ENCODE measurements at regions of chr17 and their contacts with region 1.

Region 1: GRCh38 chr17:65556014-65556909 is 5.2 kb downstream of the AXIN2 start:
- DNase-seq: peak; percentile 66 to 89 (median 78)
- ATAC-seq: peak; percentile 6 to 39 (median 27)
- H3K4me3 ChIP-seq: peak overlapping the region in 6 of 12 donors; percentile 4 to 98 (median 8)
- H3K27ac ChIP-seq: peak overlapping the region in 2 of 12 donors; percentile 35 to 56
- H3K4me1 ChIP-seq: peaks cover 0 to 40% (median 20%) of the 10 kb centered on the region in 12 donors
- H3K27me3 ChIP-seq: peaks cover 0 to 14% (median 0%) of the 10 kb centered on the region in 9 donors
- CTCF ChIP-seq: peak; percentile 69 to 84 (median 74)
- POLR2A ChIP-seq: no peak

Region 2: GRCh38 chr17:65294179-65294720 is 262.0 kb before region 1 on chr17:
- intact Hi-C with region 1: loop called in 2 of 10 experiments (anchors 5 to 10 kb)
- DNase-seq: peak; percentile 30 to 63 (median 56)
- ATAC-seq: peak; percentile 55 to 95 (median 88)
- H3K4me3 ChIP-seq: no peak overlapping the region
- H3K27ac ChIP-seq: no peak overlapping the region
- H3K4me1 ChIP-seq: peaks cover 0 to 6% (median 0%) of the 10 kb centered on the region in 12 donors
- H3K27me3 ChIP-seq: no peaks in the 10 kb centered on the region
- CTCF ChIP-seq: peak; percentile 53 to 81 (median 66)
- POLR2A ChIP-seq: no peak

Region 3: DNA sequence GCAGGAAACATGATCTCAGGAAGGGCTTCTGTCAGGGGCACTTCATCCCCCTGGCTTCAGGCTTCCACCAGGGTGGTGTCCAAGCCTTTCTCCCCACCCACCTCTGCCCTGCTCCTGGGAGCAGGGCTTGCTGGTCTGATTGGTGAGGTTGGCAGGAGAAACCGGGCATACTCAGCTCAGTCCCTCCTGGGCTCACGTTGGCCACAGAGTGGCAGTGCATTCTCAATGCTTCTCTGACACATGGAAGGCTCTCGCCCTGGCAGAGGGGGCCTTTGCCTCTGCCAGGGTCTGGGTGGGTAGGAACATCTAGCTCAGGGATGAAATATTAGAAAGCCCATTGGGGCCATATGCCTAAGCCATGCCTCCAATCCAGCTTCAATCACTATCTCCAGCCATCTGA is 137.6 kb before region 1 on chr17:
- intact Hi-C with region 1: loop called in 1 of 10 experiments (anchors 5 kb)
- DNase-seq: peak in 2 of 5 donors; percentile 35 to 40
- ATAC-seq: peak; percentile 42 to 82 (median 72)
- H3K4me3 ChIP-seq: no peak overlapping the region
- H3K27ac ChIP-seq: no peak overlapping the region
- H3K4me1 ChIP-seq: no peaks in the 10 kb centered on the region
- H3K27me3 ChIP-seq: no peaks in the 10 kb centered on the region
- CTCF ChIP-seq: peak in 7 of 12 donors; percentile 11 to 34 (median 29)
- POLR2A ChIP-seq: no peak

Region 4: GRCh38 chr17:65444049-65444448 is 112.2 kb before region 1 on chr17:
- intact Hi-C with region 1: no loop called
- DNase-seq: no peak
- ATAC-seq: no peak
- H3K4me3 ChIP-seq: no peak overlapping the region
- H3K27ac ChIP-seq: no peak overlapping the region
- H3K4me1 ChIP-seq: no peaks in the 10 kb centered on the region
- H3K27me3 ChIP-seq: no peaks in the 10 kb centered on the region
- CTCF ChIP-seq: no peak
- POLR2A ChIP-seq: no peak

Region 5: DNA sequence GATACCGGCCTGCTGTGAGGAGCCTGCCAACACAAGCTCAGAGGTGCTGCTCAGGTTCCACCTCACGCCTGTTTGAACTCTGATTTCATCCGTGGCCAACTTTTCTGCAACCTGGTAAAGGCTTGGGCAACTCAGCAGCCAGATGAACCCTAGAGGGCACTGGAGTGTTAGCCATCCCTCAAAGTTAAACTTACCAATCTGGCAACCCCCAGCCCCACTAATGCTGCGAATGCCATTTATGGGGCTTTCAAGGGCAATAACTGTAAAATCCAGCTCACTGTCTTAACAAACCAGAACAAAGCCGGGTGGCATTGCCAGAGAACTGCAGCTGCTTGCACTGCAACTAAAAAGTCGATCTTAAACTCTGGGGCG is 100.3 kb before region 1 on chr17:
- intact Hi-C with region 1: loop called in 7 of 10 experiments (anchors 1 to 5 kb)
- DNase-seq: peak in 4 of 5 donors; percentile 15 to 45 (median 34)
- ATAC-seq: peak; percentile 80 to 90 (median 87)
- H3K4me3 ChIP-seq: peak overlapping the region in 2 of 12 donors; percentile 7 to 27
- H3K27ac ChIP-seq: peak overlapping the region in 8 of 12 donors; percentile 11 to 75 (median 62)
- H3K4me1 ChIP-seq: peaks cover 0 to 19% (median 5%) of the 10 kb centered on the region in 12 donors
- H3K27me3 ChIP-seq: peaks cover 0 to 2% (median 0%) of the 10 kb centered on the region in 9 donors
- CTCF ChIP-seq: peak in 11 of 12 donors; percentile 8 to 57 (median 44)
- POLR2A ChIP-seq: no peak

Region 6: GRCh38 chr17:65463242-65463641 is 93.0 kb before region 1 on chr17:
- intact Hi-C with region 1: loop called in 7 of 10 experiments (anchors 1 to 5 kb)
- DNase-seq: peak; percentile 40 to 93 (median 75)
- ATAC-seq: peak; percentile 98 to 99 (median 98)
- H3K4me3 ChIP-seq: no peak overlapping the region
- H3K27ac ChIP-seq: peak overlapping the region; percentile 32 to 84 (median 68)
- H3K4me1 ChIP-seq: peaks cover 0 to 9% (median 0%) of the 10 kb centered on the region in 12 donors
- H3K27me3 ChIP-seq: peaks cover 0 to 2% (median 0%) of the 10 kb centered on the region in 9 donors
- CTCF ChIP-seq: no peak
- POLR2A ChIP-seq: no peak

Region 7: GRCh38 chr17:65495122-65496055 is 60.9 kb before region 1 on chr17:
- intact Hi-C with region 1: no loop called
- DNase-seq: no peak
- ATAC-seq: no peak
- H3K4me3 ChIP-seq: no peak overlapping the region
- H3K27ac ChIP-seq: no peak overlapping the region
- H3K4me1 ChIP-seq: no peaks in the 10 kb centered on the region
- H3K27me3 ChIP-seq: no peaks in the 10 kb centered on the region
- CTCF ChIP-seq: no peak
- POLR2A ChIP-seq: no peak

Region 8: DNA sequence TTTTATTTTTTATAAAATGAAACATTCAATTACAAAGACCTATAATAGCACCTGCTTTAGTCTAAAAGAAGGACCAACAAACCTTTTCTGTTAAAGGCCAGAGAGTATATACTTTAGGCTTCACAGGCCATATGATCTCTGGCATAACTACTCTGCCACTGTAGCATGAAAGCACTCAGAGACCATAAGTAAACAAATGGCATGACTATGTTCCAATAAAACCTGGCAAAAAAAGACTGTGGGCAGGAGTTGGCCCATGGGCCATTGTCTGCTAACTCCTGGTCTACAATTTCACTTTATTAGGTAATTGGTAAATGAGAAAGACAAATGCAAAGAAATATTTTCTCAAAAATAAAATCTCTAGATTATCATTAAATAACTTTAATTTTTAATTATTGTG is 620.8 kb after region 1 on chr17:
- intact Hi-C with region 1: loop called in 2 of 10 experiments (anchors 10 kb)
- DNase-seq: no peak
- ATAC-seq: no peak
- H3K4me3 ChIP-seq: no peak overlapping the region
- H3K27ac ChIP-seq: no peak overlapping the region
- H3K4me1 ChIP-seq: peaks cover 0 to 5% (median 0%) of the 10 kb centered on the region in 12 donors
- H3K27me3 ChIP-seq: no peaks in the 10 kb centered on the region
- CTCF ChIP-seq: no peak
- POLR2A ChIP-seq: no peak

Measured in heart left ventricle (tissue), 16 donors.